Psoas muscle (tissue), 8 donors: ENCODE measurements at regions of chr17 and their contacts with region 1.

Region 1: DNA sequence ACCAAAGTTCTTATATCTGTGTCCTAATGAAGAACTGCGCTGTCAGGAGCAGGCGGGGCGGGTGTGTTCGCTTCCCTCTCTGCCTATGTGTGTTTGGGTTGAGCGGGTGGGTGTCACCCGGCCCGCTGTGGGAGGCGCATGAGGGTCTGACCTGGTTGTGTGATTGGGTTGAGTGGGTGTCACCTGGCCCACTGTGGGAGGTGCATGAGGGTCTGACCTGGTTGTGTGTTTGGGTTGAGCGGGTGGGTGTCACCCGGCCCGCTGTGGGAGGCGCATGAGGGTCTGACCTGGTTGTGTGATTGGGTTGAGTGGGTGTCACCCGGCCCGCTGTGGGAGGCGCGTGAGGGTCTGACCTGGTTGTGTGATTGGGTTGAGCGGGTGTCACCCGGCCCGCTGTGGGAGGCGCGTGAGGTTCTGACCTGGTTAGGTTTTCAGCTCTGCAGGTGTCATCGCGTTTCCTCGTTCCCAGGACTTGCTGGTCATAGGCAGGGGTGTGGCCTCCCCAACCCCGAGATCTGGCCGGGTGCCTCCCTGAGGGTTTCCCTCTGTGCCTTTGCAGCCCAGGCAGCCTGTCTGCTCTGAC is 69.6 kb upstream of the ZNF750 start:
- DNase-seq: no peak
- ATAC-seq: no peak
- H3K4me3 ChIP-seq: no peak overlapping the region
- H3K27ac ChIP-seq: no peak overlapping the region
- H3K4me1 ChIP-seq: peaks cover 10% of the 10 kb centered on the region
- H3K27me3 ChIP-seq: no peaks in the 10 kb centered on the region
- CTCF ChIP-seq: no peak

Region 2: DNA sequence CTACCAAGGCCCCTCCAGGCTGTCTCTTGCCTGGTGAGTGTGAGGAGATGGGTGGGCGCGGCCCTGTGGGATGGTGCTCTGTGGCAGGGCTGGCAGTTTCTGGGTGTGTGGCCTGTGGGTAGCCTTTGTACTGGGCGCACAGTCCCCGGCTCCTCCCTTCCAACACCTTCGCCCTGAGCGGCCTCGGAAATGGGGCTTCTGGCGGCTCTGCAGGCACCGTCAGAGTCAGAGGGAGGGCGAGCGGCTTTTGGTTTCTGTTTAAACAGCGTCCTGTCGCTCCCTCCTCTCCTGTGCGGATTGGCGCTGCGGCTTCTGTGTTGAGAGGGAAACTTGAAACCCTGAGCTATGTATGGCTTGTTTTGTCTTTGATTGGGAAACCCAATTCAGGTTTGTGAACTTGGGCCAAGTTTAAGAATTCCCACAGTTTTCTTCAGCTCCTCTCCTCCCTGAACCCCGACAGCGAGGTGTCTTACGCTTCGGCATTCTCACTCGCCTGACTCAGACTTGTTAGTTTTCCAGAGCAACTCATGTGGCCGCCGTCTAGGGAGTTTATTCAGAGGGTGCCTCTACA is 61.3 kb before region 1 on chr17:
- intact Hi-C with region 1: loop called in 1 of 2 experiments (anchors 5 kb)
- DNase-seq: peak; percentile 57 to 79
- ATAC-seq: peak; percentile 58 to 65 (median 60)
- H3K4me3 ChIP-seq: peak overlapping the region; percentile 45
- H3K27ac ChIP-seq: peak overlapping the region; percentile 31
- H3K4me1 ChIP-seq: no peaks in the 10 kb centered on the region
- H3K27me3 ChIP-seq: no peaks in the 10 kb centered on the region
- CTCF ChIP-seq: no peak

Region 3: DNA sequence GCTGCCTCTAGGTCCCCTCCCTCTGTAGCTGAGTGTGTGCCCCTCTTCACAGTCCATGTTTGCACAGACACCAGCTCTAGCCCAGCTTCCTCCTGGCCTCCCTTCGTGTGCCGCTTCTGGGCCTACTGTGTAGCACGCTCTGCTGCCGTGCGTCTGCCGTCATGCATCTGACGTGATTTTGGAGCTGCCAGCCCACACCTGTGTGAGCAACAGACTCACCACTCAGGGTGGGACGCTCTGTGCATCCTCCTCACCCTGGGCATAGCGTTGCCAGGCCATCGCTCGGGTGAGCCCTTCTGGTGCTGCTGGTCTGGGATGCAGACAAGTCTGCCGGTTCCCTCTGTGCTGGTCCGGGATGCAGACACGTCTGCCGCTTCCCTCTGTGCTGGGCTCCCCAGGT is 30.2 kb before region 1 on chr17:
- intact Hi-C with region 1: loop called in 1 of 2 experiments (anchors 1 kb)
- DNase-seq: peak in 1 of 2 donors; percentile 32
- ATAC-seq: no peak
- H3K4me3 ChIP-seq: no peak overlapping the region
- H3K27ac ChIP-seq: no peak overlapping the region
- H3K4me1 ChIP-seq: peaks cover 34% of the 10 kb centered on the region
- H3K27me3 ChIP-seq: no peaks in the 10 kb centered on the region
- CTCF ChIP-seq: no peak